ENCODE measurements at regions of chr3 and their contacts with region 1.

Region 1: GRCh38 chr3:3636810-3637422 is 162.3 kb upstream of the LRRN1 start:
- DNase-seq: peak; percentile 71 to 88
- H3K4me3 ChIP-seq: no peak overlapping the region
- H3K27ac ChIP-seq: peak overlapping the region; percentile 44 to 63
- H3K4me1 ChIP-seq: no peaks in the 10 kb centered on the region
- H3K27me3 ChIP-seq: no peaks in the 10 kb centered on the region
- CTCF ChIP-seq: no peak
- POLR2A ChIP-seq: no peak

Region 2: DNA sequence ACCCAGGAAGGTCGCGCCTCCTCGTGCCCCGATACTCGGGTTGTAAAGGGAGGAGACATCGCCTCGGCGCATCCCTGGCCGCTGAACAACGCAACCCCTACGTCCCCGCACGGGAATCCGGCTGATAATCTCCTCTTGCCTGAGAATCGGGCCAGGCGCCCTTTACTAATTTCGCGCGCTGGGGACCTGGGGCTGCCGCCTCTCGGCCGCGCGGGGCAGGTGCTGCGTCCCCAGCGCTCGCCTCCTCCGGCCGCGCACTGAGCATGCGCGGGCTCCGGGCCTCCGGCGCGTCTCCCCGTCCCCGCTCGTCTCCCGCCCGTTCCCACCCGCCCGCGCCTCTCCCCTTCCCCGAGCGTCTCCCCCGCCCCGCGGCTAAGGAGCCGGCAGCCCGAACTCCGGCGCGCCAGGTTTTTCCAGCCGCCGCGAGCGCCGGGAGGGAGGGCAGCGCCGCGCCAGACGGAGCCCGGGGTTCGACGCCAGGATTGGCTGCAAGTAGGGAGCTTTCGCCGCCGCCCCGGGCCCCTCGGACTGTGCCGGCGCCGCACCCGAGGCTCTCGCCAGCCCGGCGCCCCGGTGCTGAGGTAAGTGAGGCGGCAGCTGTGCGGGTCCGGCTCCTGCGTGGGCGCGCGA is 1538.4 kb before region 1 on chr3 and contains the start of gene CNTN4:
- intact Hi-C with region 1: no loop called
- DNase-seq: peak; percentile 48 to 72
- H3K4me3 ChIP-seq: peak within 1 kb of the TSS; percentile 49 to 70 (median 69)
- H3K27ac ChIP-seq: peak within 1 kb of the TSS; percentile 45 to 72
- H3K4me1 ChIP-seq: peaks cover 0 to 4% of the 10 kb centered on the region in 2 donors
- H3K27me3 ChIP-seq: peaks cover 0 to 6% of the 10 kb centered on the region in 2 donors
- CTCF ChIP-seq: peak in 1 of 3 donors; percentile 30
- POLR2A ChIP-seq: no peak
- total RNA-seq, gene CNTN4: 6.6 to 16.7 (median 16.7) TPM

Region 3: GRCh38 chr3:3714572-3714971 is 77.7 kb after region 1 on chr3:
- intact Hi-C with region 1: no loop called
- DNase-seq: no peak
- H3K4me3 ChIP-seq: no peak overlapping the region
- H3K27ac ChIP-seq: no peak overlapping the region
- H3K4me1 ChIP-seq: no peaks in the 10 kb centered on the region
- H3K27me3 ChIP-seq: no peaks in the 10 kb centered on the region
- CTCF ChIP-seq: no peak
- POLR2A ChIP-seq: no peak

Region 4: DNA sequence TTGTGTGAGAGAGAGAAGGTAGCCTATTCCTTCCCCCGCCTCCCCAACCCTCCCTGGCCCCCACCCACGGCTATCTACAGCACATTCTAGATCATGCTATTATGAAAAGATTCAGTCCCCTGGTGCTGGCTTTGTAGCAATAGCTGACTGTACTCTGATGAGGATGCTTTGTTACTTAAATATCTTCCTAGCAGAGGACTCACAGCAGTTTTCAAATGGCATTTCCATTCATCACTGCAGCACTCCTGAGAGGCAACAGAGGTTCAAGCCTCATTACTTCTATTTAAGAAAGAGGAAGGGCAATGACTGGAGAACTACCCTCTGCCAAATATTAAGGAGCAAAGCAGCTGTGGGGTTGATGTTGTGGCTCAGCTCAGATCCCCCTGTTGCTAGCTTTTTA is 223.3 kb after region 1 on chr3:
- intact Hi-C with region 1: loop called (anchors 5 kb)
- DNase-seq: no peak
- H3K4me3 ChIP-seq: no peak overlapping the region
- H3K27ac ChIP-seq: no peak overlapping the region
- H3K4me1 ChIP-seq: no peaks in the 10 kb centered on the region
- H3K27me3 ChIP-seq: no peaks in the 10 kb centered on the region
- CTCF ChIP-seq: no peak
- POLR2A ChIP-seq: no peak

Region 5: GRCh38 chr3:5305684-5305989 is 1668.7 kb after region 1 on chr3:
- intact Hi-C with region 1: no loop called
- DNase-seq: no peak
- H3K4me3 ChIP-seq: no peak overlapping the region
- H3K27ac ChIP-seq: no peak overlapping the region
- H3K4me1 ChIP-seq: no peaks in the 10 kb centered on the region
- H3K27me3 ChIP-seq: no peaks in the 10 kb centered on the region
- CTCF ChIP-seq: no peak
- POLR2A ChIP-seq: no peak

Measured in breast epithelium (tissue), 4 donors.